Activated naive CD4-positive, alpha-beta T cell treated with anti-CD3 and anti-CD28 coated beads for 36 hours (primary cell): ENCODE measurements at regions of chr9 and their contacts with region 1.

Region 1: DNA sequence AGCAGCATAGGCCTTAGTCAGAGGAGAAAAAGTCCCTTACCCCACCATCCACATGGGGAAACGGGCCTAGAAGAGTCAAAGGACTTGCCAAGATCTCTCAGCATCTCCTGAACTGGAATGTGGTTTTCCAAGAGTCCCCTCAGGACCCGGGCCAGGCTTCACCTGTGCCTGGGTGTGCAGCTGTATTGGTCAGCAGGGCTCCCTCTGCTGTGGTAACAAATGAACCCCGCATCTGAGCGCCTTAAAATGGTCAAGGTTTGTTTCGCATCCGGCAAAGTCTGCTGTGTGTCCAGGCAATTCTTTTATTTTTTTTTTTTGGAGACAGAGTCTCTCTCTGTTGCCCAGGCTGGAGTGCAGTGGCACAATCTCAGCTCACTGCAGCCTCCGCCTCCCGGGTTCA is 168.0 kb upstream of the IER5L start:
- DNase-seq: no peak
- H3K4me3 Mint-ChIP-seq: no peak overlapping the region
- H3K27ac Mint-ChIP-seq: no peak overlapping the region
- H3K4me1 Mint-ChIP-seq: peaks cover 3% of the 10 kb centered on the region
- H3K27me3 Mint-ChIP-seq: no peaks in the 10 kb centered on the region

Region 2: DNA sequence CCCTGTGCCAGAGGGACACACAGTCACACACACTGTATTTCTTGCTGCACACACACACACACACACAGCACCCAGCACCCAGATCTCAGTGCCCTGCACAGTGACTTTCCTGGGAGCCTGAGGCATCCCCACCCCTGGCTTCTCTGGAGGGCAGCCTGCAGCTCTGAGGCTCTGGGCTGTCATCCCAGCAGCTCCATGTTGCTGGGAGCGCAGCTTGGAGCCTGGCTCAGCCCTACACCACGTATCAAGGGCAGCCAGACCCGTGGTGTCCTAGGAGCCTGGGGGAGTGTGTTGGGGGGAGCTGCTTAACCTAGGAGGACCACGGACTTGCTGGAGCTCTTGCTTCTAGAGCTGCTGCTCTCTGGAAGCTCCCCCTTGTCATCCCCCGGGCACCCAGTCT is 173.2 kb before region 1 on chr9:
- CTCF ChIA-PET with region 1: interaction called, 5 read pairs
- intact Hi-C with region 1: loop called (anchors 1 kb)
- DNase-seq: no peak
- H3K4me3 Mint-ChIP-seq: no peak overlapping the region
- H3K27ac Mint-ChIP-seq: no peak overlapping the region
- H3K4me1 Mint-ChIP-seq: peaks cover 16% of the 10 kb centered on the region
- H3K27me3 Mint-ChIP-seq: no peaks in the 10 kb centered on the region

Region 3: GRCh38 chr9:129208207-129209032 is 137.6 kb before region 1 on chr9:
- CTCF ChIA-PET with region 1: no interaction called
- intact Hi-C with region 1: no loop called
- DNase-seq: peak; percentile 70
- H3K4me3 Mint-ChIP-seq: peak overlapping the region; percentile 49
- H3K27ac Mint-ChIP-seq: peak overlapping the region; percentile 70
- H3K4me1 Mint-ChIP-seq: peaks cover 28% of the 10 kb centered on the region
- H3K27me3 Mint-ChIP-seq: no peaks in the 10 kb centered on the region

Region 4: DNA sequence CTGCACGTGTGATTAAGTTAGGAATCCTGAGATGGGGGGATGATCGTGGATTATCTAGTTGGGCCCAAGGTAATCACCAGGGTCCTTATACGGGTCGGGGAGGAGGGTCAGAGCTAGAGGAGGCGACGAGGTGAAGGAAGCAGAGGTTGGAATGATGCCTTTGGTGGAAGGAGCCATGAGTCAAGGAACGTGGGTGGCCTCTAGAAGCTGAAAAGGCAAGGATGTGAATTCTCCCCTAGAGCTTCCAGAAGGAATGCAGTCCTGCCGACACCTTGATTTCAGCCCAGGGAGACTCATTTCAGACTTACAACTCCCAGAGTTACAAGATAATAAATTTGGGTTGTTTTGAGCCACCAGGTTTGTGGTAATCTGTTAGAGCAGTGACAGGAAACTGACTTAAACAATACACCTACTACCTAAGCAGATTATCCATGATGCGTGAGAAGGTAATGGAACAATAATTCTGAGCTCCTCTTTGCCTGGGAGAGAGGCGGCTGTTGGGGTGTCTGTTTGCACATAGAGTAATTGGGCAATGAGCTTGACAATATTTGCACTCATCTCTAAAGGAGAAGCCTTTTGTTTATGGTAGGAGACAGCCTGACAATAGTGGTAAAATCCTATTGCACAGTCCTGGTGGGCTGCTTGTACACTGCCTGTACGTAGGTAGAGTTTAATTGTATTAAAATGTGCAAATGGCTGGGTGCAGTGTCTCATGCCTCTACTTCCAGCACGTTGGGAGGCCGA is 38.6 kb before region 1 on chr9:
- CTCF ChIA-PET with region 1: no interaction called
- intact Hi-C with region 1: no loop called
- DNase-seq: no peak
- H3K4me3 Mint-ChIP-seq: no peak overlapping the region
- H3K27ac Mint-ChIP-seq: no peak overlapping the region
- H3K4me1 Mint-ChIP-seq: peaks cover 6% of the 10 kb centered on the region
- H3K27me3 Mint-ChIP-seq: no peaks in the 10 kb centered on the region